ENCODE measurements at regions of chrX and their contacts with region 1.

Region 1: GRCh38 chrX:106999002-106999975 is 723 bp downstream of the MORC4 start:
- DNase-seq: peak; percentile 62
- H3K4me3 Mint-ChIP-seq: peak overlapping the region; percentile 70
- H3K27ac Mint-ChIP-seq: no peak overlapping the region
- H3K4me1 Mint-ChIP-seq: peaks cover 7% of the 10 kb centered on the region
- H3K27me3 Mint-ChIP-seq: no peaks in the 10 kb centered on the region

Region 2: GRCh38 chrX:106791495-106791894 is 207.8 kb before region 1 on chrX:
- CTCF ChIA-PET with region 1: no interaction called
- POLR2A ChIA-PET with region 1: no interaction called
- intact Hi-C with region 1: no loop called
- DNase-seq: no peak
- H3K4me3 Mint-ChIP-seq: no peak overlapping the region
- H3K27ac Mint-ChIP-seq: no peak overlapping the region
- H3K4me1 Mint-ChIP-seq: no peaks in the 10 kb centered on the region
- H3K27me3 Mint-ChIP-seq: no peaks in the 10 kb centered on the region

Region 3: GRCh38 chrX:107118322-107119147 is 119.2 kb after region 1 on chrX and contains the start of gene RBM41:
- CTCF ChIA-PET with region 1: no interaction called
- POLR2A ChIA-PET with region 1: no interaction called
- intact Hi-C with region 1: loop called (anchors 2 kb)
- DNase-seq: peak; percentile 81
- H3K4me3 Mint-ChIP-seq: peak within 1 kb of the TSS; percentile 96
- H3K27ac Mint-ChIP-seq: peak within 1 kb of the TSS; percentile 93
- H3K4me1 Mint-ChIP-seq: peaks cover 32% of the 10 kb centered on the region
- H3K27me3 Mint-ChIP-seq: no peaks in the 10 kb centered on the region
- total RNA-seq, gene RBM41: 9.5 to 11.4 TPM

Region 4: DNA sequence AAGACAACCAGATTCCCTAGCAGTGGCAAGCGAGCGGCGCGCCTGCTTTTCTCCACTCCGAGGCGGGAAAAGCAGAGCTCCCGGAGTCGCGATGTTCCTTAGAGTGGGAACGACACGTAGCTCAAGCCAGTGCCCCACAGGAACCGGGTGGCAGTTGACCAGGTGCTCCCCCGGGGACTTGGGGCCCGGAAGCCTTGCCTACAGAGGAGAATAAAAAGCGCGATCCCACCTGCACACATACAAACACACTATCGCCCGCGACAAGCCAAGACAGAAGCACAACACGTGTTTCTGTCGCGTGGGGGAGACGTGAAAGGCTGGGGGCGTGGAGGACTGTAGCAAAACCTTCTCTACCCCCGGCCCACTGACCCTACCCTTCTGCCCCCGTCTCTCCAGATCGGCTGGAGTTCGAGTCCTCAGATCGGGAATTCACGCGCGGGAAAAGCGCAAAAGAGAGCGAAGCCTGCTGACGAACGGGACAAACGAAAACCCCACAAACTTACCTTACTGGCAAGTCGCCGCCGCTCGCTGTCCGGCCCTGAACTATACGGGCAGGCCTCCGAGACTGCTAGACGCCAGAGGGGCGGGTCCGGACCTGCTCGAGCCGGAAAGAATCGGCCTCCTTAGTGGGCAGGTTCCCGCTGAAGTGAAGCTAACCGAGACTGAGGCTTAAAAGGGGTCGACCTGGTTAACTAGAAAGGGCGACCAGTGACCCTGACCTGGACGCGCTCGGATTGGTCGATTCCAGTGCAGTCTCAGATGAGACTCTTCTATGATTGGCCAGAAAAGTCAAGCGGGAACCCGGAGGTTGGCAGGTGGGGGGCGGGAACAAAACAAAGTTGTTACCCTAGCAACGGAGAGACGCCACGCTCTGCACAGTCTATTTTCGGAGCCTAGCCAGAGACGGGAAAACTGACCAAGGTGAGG is 206.7 kb after region 1 on chrX and contains the starts of genes DNAAF6 and NUP62CL:
- CTCF ChIA-PET with region 1: no interaction called
- POLR2A ChIA-PET with region 1: no interaction called
- intact Hi-C with region 1: loop called (anchors 5 kb)
- DNase-seq: peak; percentile 78
- H3K4me3 Mint-ChIP-seq: peak within 1 kb of the TSS; percentile 83
- H3K27ac Mint-ChIP-seq: no peak within 1 kb of the TSS
- H3K4me1 Mint-ChIP-seq: peaks cover 3% of the 10 kb centered on the region
- H3K27me3 Mint-ChIP-seq: no peaks in the 10 kb centered on the region
- total RNA-seq, gene DNAAF6: not detected
- total RNA-seq, gene NUP62CL: 2.5 to 2.8 TPM

Region 5: DNA sequence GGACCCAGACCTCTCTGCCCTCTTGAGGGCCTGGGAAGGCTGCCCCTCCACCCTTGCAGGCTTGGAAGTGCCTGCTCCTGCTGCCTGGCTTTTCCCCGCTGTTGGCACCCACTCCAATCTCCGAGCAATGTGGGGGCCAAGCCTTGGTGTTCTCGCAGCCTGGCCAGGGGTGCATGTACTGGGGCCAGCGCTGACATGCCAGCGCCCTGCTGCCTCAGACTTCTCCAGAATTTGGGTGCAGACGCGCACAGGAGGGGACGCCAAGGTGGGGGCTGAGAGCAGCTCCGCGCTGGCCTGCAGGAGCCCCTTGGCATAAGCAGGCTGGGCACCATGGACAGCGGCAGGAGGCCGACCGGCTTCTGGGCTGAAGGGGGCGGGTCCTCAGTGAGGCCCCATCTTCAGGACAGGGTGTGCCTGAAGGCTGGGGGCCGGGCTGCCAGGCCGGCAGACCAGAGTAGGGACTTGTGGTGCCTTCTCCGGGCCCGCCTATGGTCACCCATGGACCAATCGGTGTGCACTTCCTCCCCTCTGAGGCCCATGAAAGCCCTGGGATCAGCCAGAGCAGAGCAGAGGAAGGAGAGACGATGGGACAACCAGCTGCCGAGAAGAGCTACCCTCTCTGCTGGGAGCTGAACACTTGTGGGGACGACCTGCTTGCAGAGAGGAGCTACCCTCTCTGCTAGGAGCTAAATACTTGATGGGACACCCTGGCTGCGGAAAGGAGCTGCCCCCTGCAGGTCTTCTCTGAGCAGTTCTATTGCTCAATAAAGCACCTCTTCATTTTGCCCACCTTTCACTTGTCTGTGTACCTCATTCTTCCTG is 325.4 kb after region 1 on chrX:
- CTCF ChIA-PET with region 1: interaction called, 8 read pairs
- POLR2A ChIA-PET with region 1: no interaction called
- intact Hi-C with region 1: loop called (anchors 1 kb)
- DNase-seq: peak; percentile 24
- H3K4me3 Mint-ChIP-seq: no peak overlapping the region
- H3K27ac Mint-ChIP-seq: no peak overlapping the region
- H3K4me1 Mint-ChIP-seq: no peaks in the 10 kb centered on the region
- H3K27me3 Mint-ChIP-seq: peaks cover 7% of the 10 kb centered on the region

Region 6: GRCh38 chrX:107429090-107429489 is 429.8 kb after region 1 on chrX:
- CTCF ChIA-PET with region 1: interaction called, 15 read pairs
- POLR2A ChIA-PET with region 1: no interaction called
- intact Hi-C with region 1: loop called (anchors 5 kb)
- DNase-seq: peak; percentile 50
- H3K4me3 Mint-ChIP-seq: no peak overlapping the region
- H3K27ac Mint-ChIP-seq: no peak overlapping the region
- H3K4me1 Mint-ChIP-seq: no peaks in the 10 kb centered on the region
- H3K27me3 Mint-ChIP-seq: no peaks in the 10 kb centered on the region

Measured in activated CD4-positive, alpha-beta memory T cell treated with anti-CD3 and anti-CD28 coated beads for 36 hours (primary cell).